Dorsolateral prefrontal cortex (tissue), 120 donors: ENCODE measurements at regions of chr6 and their contacts with region 1.

Region 1: DNA sequence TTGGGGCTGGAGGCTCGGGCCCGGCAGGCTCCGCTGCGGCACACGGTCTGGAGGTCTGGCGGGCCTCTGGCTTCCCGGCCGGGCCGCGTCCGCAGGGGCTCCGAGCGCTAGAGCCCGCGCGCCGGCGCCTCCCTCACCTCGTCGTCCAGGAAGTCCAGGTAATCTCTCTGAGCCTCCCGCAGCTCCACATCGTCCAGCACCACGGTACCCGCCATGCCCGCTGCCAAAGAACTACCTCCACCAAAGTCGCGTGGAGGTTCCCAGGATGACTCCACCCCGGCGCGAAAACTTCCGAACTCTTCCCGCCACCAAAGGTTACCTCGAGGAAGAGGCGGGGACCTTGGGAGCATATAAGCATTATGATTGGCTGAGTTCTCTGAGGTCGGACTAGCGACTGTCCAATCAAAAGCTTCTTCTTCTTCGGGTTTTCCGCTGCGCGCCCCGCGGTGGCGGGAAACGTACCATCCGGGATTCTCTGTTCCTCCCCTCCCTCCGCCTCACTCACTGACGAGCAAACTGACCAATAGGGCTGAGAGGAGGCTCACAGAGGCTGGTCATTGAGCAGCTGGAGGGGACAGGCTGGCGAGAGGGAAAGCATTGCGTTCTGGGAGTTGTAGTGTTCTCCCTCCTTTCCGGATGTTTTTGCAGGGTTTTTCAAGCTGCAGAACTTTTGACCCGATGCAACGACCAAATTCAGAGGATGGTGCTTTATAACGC is at the start of gene MCM3:
- DNase-seq: peak; percentile 93 to 99 (median 98)
- H3K4me3 ChIP-seq: peak within 1 kb of the TSS; percentile 60 to 98 (median 89)
- H3K27ac ChIP-seq: peak within 1 kb of the TSS in 58 of 59 donors; percentile 1 to 93 (median 82)
- H3K27me3 ChIP-seq: no peaks in the 10 kb centered on the region
- CTCF ChIP-seq: peak in 34 of 56 donors; percentile 10 to 63 (median 34)
- total RNA-seq, gene MCM3: 10.8 to 22.0 (median 16.5) TPM

Region 2: DNA sequence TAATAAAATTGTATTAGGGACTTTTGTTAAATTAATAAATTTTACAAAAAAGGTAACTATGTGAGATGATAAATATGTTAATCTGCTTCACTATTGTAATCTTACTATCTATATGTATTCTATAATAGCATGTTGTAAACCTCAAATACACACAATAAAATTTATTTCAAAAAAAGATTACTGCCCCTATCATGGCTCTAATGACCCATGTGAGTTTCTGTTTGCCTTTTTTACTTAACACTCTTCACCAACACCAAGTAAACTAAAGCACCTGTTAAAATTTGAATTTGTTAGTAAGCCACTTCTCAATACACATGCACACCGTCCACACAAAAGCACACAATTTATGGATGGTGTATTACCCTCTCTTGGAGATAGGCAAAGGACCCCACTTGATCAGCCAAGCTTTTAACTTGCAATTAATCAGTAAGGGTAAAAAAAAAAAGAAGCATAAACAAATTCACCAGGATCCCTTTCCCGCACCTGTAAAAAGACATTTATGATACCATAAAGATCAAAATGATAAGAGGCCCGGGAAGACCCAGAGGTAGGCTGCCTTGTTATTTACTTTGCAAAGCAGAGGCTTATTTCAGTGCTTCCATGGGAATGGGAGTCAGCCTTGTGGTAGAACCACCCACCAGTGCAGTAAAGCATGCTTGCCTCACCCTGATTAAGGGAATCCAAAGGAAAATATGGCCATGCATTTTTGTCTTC is 168.6 kb before region 1 on chr6:
- intact Hi-C with region 1: no loop called
- DNase-seq: no peak
- H3K4me3 ChIP-seq: no peak overlapping the region
- H3K27ac ChIP-seq: no peak overlapping the region
- H3K27me3 ChIP-seq: peaks cover 0 to 6% (median 0%) of the 10 kb centered on the region in 45 donors
- CTCF ChIP-seq: no peak

Region 3: GRCh38 chr6:52399511-52400312 is 115.1 kb after region 1 on chr6:
- intact Hi-C with region 1: loop called (anchors 2 to 5 kb)
- DNase-seq: peak in 1 of 10 donors; percentile 53
- H3K4me3 ChIP-seq: no peak overlapping the region
- H3K27ac ChIP-seq: peak overlapping the region in 56 of 59 donors; percentile 8 to 97 (median 65)
- H3K27me3 ChIP-seq: no peaks in the 10 kb centered on the region
- CTCF ChIP-seq: peak; percentile 67 to 92 (median 83)

Region 4: DNA sequence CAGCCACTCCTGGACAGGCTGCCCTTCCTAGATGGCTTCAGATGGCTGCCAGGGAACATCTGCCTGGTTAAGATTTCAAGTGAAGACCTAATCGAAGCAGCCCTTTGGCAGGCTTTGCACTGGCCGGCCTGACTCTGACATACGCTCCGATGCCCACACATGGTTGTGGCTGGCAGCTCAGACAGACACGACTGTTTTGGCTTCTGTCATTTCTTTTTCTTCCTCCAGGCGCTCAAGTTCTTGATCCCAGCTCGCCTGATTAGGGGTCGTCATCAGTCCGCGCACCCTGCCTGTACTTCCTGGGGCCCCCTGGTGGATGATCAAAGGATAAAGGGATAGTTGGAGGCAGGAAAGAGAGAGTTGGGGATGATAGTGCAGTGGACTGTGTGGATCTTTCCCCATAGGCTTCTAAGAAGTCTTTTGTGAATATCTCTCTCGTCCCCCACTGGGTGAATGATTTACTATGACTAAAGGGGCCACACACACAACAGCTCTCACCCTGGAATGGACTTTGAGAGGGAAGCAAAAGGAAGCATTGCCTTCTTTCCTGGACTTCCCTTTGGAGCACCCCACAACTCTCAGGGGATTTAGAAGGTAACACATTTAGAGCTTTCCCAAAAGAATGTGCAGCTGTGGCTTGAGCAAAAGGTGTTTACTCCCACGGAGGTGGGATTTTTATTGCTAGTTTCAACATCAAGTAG is 313.7 kb after region 1 on chr6:
- intact Hi-C with region 1: loop called in 1 of 2 experiments (anchors 5 kb)
- DNase-seq: peak in 6 of 10 donors; percentile 20 to 60 (median 44)
- H3K4me3 ChIP-seq: peak overlapping the region in 52 of 59 donors; percentile 1 to 61 (median 40)
- H3K27ac ChIP-seq: peak overlapping the region in 3 of 59 donors; percentile 25 to 64 (median 27)
- H3K27me3 ChIP-seq: no peaks in the 10 kb centered on the region
- CTCF ChIP-seq: peak; percentile 33 to 82 (median 66)

Region 5: DNA sequence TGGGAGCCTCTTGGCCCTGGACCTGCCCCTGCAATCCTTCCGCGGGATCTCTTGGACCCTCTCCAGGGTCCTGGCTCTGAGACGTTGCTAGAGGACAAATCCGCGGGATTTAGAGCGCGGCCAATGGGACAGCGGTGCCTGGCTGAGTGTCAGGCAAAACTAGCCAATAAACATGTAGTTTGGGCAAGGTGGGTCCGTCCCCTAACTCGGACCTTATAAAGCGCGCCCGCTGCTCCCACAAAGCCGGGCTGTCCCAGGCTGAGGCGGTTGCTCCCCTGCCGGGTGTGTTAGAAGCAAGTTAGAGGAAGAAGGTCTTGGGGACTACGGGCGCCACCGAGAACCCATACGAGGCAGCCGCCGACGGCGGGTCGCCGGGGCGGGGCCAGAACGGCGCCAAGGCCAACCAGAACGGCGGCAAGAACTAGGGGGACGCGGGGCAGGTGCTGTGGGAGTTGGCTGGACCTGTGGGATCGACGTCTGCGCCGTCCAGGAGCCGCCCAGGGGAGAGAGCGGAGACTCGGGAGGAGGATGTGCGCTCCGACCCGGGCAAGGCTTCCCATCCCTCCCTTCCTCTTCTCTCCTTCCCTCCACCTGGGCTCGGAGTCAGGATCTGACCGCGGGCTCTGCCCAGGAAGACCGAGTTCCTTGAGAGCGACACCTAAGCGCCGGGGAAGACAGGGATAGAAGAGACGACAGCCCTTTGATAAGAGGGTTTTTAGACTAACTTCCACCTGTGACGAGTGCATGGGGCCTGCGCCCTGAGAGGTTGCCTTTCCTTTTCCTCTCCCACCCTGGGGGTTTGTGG is 379.8 kb after region 1 on chr6:
- intact Hi-C with region 1: loop called (anchors 2 to 5 kb)
- DNase-seq: peak; percentile 65 to 94 (median 90)
- H3K4me3 ChIP-seq: peak overlapping the region; percentile 60 to 97 (median 79)
- H3K27ac ChIP-seq: peak overlapping the region in 28 of 59 donors; percentile 1 to 76 (median 50)
- H3K27me3 ChIP-seq: no peaks in the 10 kb centered on the region
- CTCF ChIP-seq: no peak